ENCODE measurements at regions of chr12 and their contacts with region 1.

Region 1: DNA sequence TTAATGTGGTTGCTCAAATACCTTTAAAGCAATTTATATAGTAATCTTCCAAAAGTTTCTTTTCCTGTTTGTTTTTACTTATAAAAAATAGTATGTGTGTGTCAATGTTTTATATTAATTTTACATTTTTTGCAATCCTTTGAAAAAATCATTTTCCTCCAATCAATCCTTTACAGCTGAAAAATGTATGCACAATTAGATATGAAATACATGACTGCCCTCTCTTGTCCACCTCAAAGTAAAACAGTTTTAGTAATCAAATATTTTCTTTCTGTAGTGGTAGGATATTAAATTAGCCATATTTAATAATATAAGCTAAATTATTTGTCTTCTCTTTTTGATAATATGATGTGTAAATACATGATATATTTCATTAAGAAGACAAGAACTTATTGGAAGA is 269.9 kb downstream of the ADAMTS20 start:
- DNase-seq: peak; percentile 35
- H3K4me3 ChIP-seq: no peak overlapping the region
- H3K27ac ChIP-seq: no peak overlapping the region
- H3K4me1 ChIP-seq: peaks cover 5 to 7% of the 10 kb centered on the region in 2 experiments; a peak in 3 of 4 replicates
- H3K27me3 ChIP-seq: no peaks in the 10 kb centered on the region
- CTCF ChIP-seq: peak; percentile 51
- EP300 ChIP-seq: no peak
- RAD21 ChIP-seq: peak; percentile 85

Region 2: GRCh38 chr12:42568952-42569915 is 712.9 kb before region 1 on chr12:
- CTCF ChIA-PET with region 1: interaction called, 12 read pairs
- POLR2A ChIA-PET with region 1: no interaction called
- DNase-seq: no peak
- H3K4me3 ChIP-seq: no peak overlapping the region
- H3K27ac ChIP-seq: no peak overlapping the region; a peak in 1 of 4 replicates
- H3K4me1 ChIP-seq: peaks cover 0 to 10% of the 10 kb centered on the region in 2 experiments; a peak in 2 of 4 replicates
- H3K27me3 ChIP-seq: no peaks in the 10 kb centered on the region
- CTCF ChIP-seq: peak; percentile 68
- EP300 ChIP-seq: no peak
- RAD21 ChIP-seq: peak; percentile 86

Region 3: DNA sequence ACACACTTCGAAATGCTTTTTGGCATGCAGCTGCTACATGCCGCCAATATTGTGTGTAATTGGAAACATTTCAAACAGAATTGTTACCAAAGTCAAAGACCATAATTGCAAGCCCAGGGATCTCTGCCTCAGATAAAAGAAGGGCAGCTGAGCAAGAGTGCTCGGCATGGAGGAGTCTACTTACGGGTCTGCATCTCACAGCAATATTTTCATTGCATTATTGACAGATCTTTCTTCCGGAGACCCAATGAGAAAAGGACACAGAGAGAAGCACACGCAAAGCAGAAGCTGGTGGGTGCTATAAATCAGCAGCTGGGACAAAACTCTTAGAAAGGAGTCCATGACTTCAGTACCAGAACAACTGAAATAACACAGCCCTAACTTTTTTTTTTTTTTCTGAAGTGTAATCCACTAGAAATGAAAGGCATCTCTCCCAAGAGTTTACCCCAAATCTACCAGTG is 697.4 kb before region 1 on chr12:
- CTCF ChIA-PET with region 1: interaction called, 23 read pairs
- POLR2A ChIA-PET with region 1: no interaction called
- DNase-seq: peak; percentile 24
- H3K4me3 ChIP-seq: no peak overlapping the region; a peak in 1 of 4 replicates
- H3K27ac ChIP-seq: peak overlapping the region in 1 of 2 experiments; percentile 50; a peak in 2 of 4 replicates
- H3K4me1 ChIP-seq: peaks cover 7 to 19% of the 10 kb centered on the region in 2 experiments; a peak in 3 of 4 replicates
- H3K27me3 ChIP-seq: peaks cover 22% of the 10 kb centered on the region
- CTCF ChIP-seq: no peak
- EP300 ChIP-seq: peak in 1 of 2 experiments; percentile 17; a peak in 1 of 4 replicates
- RAD21 ChIP-seq: no peak

Region 4: GRCh38 chr12:43029971-43030370 is 252.1 kb before region 1 on chr12:
- CTCF ChIA-PET with region 1: no interaction called
- POLR2A ChIA-PET with region 1: no interaction called
- DNase-seq: no peak
- H3K4me3 ChIP-seq: no peak overlapping the region
- H3K27ac ChIP-seq: no peak overlapping the region
- H3K4me1 ChIP-seq: no peaks in the 10 kb centered on the region
- H3K27me3 ChIP-seq: no peaks in the 10 kb centered on the region
- CTCF ChIP-seq: no peak
- EP300 ChIP-seq: no peak
- RAD21 ChIP-seq: no peak

Region 5: DNA sequence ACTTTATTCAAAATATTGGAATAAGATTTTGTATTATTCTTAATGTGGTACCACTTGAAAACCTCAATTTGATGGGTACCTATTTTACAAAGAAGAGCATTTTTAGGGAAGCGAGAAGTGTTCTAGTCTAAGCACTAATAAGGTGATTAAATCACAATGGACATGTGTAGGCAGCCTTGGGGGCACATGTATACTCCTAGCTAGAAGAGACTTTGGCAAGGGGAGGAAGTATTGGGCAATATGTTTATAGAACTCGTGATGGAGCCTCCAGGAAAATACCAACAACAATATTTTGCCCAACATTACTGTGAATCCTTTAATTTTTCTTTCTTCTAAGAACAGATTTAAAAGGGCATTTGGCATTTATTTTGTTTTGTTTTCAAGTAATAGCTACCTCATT is 10.4 kb before region 1 on chr12:
- CTCF ChIA-PET with region 1: interaction called, 14 read pairs
- POLR2A ChIA-PET with region 1: no interaction called
- DNase-seq: no peak
- H3K4me3 ChIP-seq: no peak overlapping the region
- H3K27ac ChIP-seq: no peak overlapping the region
- H3K4me1 ChIP-seq: no peaks in the 10 kb centered on the region
- H3K27me3 ChIP-seq: no peaks in the 10 kb centered on the region
- CTCF ChIP-seq: no peak
- EP300 ChIP-seq: no peak
- RAD21 ChIP-seq: no peak

Region 6: DNA sequence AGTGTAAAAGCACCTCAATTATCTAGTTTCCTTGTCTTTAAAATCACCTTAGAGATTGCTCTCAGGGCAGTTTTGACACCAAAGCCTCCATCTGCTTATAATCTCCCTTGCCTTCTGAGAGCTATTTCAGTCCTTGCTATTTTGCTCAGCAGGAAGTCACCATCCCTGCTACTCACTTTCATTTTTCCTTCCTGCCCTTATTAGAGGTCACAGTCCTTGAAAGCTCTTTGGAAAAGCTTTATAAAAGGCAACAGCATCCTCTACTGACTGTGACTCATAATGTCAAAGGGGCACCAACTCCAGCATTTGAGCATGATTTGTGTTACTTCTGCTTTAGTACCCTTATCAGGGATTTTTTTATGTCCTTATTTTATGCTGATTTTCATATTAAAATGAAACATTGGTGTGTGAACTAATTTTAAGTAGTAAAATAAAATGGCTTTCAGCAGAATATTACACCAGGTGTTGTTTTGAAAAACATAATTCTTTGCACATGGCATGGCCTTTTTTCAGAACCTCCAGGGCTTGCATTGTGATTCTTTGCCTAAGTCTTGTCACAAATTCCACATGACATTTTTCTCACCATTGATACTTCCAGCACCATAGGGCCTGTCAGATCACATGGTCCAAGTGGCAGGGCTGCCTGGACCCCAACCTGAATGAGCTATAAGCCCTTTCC is 56.9 kb after region 1 on chr12:
- CTCF ChIA-PET with region 1: interaction called, 19 read pairs
- POLR2A ChIA-PET with region 1: no interaction called
- DNase-seq: peak; percentile 31
- H3K4me3 ChIP-seq: peak overlapping the region in 1 of 2 experiments; percentile 28; a peak in 1 of 4 replicates
- H3K27ac ChIP-seq: peak overlapping the region in 1 of 2 experiments; percentile 53; a peak in 2 of 4 replicates
- H3K4me1 ChIP-seq: peaks cover 0 to 6% of the 10 kb centered on the region in 2 experiments; a peak in 2 of 4 replicates
- H3K27me3 ChIP-seq: no peaks in the 10 kb centered on the region
- CTCF ChIP-seq: peak; percentile 70
- EP300 ChIP-seq: no peak
- RAD21 ChIP-seq: peak; percentile 93

Region 7: GRCh38 chr12:43676183-43676813 is 394.2 kb after region 1 on chr12:
- CTCF ChIA-PET with region 1: no interaction called
- POLR2A ChIA-PET with region 1: no interaction called
- DNase-seq: peak; percentile 41
- H3K4me3 ChIP-seq: no peak overlapping the region
- H3K27ac ChIP-seq: no peak overlapping the region
- H3K4me1 ChIP-seq: no peaks in the 10 kb centered on the region; a peak in 1 of 4 replicates
- H3K27me3 ChIP-seq: no peaks in the 10 kb centered on the region
- CTCF ChIP-seq: peak; percentile 65
- EP300 ChIP-seq: no peak
- RAD21 ChIP-seq: peak; percentile 47

Region 8: DNA sequence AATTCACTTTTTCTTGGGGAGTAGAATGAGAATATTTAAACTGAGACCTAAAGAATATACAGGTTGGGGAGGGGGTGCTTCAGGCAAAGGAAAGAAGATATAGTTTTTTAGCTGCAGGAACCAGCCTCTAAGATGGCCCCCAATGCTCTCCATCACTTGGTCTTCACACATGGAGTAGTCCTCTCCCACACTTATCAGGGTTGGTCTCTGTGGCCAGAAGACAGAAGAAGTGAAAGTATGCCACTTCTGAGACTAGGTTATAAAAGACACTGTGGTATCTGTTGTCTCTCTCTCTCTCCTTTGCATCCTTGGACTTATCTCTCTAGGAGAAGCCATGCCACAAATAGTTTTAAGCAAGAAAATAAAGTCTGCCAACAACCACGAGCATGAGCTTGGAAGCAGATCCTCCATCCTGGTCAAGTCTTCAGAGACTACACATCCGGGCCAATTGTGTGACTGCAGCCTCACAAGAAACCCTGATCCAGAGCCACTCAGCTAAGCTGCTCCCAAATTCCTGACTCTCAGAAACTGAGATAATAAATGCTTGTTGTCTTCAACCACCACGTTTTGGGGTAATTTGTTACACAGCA is 458.5 kb after region 1 on chr12:
- CTCF ChIA-PET with region 1: no interaction called
- POLR2A ChIA-PET with region 1: no interaction called
- DNase-seq: no peak
- H3K4me3 ChIP-seq: no peak overlapping the region
- H3K27ac ChIP-seq: no peak overlapping the region
- H3K4me1 ChIP-seq: peaks cover 0 to 17% of the 10 kb centered on the region in 2 experiments; a peak in 2 of 4 replicates
- H3K27me3 ChIP-seq: no peaks in the 10 kb centered on the region
- CTCF ChIP-seq: no peak
- EP300 ChIP-seq: no peak
- RAD21 ChIP-seq: no peak